Activated T-helper 1 cell treated with anti-CD3 and anti-CD28 coated beads, Interleukin-12 subunit alpha, Interleukin-12 subunit beta, Interleukin-2, Interleukin-4 antibody, amounts not matched to agents 30 ng/mL and 10 ng/mL and 1 ng/mL, durations not matched to agents 14 hours and 24 hours and 36 hours (primary cell): ENCODE measurements at regions of chr4 and their contacts with region 1.

Region 1: GRCh38 chr4:149264093-149264733 is 551.4 kb downstream of the IQCM start:
- DNase-seq: no peak
- H3K4me3 Mint-ChIP-seq: no peak overlapping the region
- H3K27ac Mint-ChIP-seq: no peak overlapping the region
- H3K4me1 Mint-ChIP-seq: no peaks in the 10 kb centered on the region
- H3K27me3 Mint-ChIP-seq: peaks cover 2% of the 10 kb centered on the region

Region 2: GRCh38 chr4:147924604-147925412 is 1339.4 kb before region 1 on chr4:
- intact Hi-C with region 1: loop called (anchors 10 kb)
- DNase-seq: no peak
- H3K4me3 Mint-ChIP-seq: no peak overlapping the region
- H3K27ac Mint-ChIP-seq: no peak overlapping the region
- H3K4me1 Mint-ChIP-seq: no peaks in the 10 kb centered on the region
- H3K27me3 Mint-ChIP-seq: no peaks in the 10 kb centered on the region

Region 3: DNA sequence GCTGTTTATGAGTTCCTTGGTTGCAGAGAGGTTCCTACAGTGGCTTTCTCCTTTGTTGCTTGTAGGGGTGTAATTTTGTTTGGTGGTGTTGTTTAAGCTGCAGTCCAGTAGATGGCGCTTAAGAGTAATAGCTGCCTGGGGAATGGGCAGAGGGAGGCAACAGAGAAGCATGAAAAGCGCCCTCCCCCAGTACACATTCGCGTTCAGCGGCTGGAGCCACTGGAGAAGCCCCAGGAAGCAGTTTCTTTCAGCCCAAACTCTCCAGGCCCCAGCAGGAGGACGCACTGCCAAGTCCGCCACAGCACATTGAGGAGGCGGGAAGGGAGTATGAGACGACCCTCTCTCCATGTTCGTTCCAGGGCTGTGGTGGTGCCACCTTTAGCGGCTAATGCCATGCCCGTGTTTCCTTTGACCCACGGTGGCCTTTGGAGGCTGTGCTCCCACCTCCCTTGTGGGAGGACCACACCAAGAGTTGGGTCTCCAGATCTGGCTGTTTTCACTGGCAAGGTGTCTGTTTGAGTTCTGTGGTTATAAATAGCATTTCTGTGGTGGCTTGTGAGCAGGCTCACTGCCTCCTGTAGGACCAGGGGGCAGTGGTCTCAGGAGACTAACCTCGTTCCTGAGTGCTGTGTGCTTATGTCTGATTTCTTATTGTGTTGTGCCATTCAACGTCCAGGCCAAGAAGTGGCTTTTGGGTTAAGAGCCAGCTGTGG is 1280.0 kb before region 1 on chr4:
- intact Hi-C with region 1: loop called (anchors 5 kb)
- DNase-seq: peak; percentile 8
- H3K4me3 Mint-ChIP-seq: no peak overlapping the region
- H3K27ac Mint-ChIP-seq: no peak overlapping the region
- H3K4me1 Mint-ChIP-seq: peaks cover 16% of the 10 kb centered on the region
- H3K27me3 Mint-ChIP-seq: peaks cover 5% of the 10 kb centered on the region

Region 4: DNA sequence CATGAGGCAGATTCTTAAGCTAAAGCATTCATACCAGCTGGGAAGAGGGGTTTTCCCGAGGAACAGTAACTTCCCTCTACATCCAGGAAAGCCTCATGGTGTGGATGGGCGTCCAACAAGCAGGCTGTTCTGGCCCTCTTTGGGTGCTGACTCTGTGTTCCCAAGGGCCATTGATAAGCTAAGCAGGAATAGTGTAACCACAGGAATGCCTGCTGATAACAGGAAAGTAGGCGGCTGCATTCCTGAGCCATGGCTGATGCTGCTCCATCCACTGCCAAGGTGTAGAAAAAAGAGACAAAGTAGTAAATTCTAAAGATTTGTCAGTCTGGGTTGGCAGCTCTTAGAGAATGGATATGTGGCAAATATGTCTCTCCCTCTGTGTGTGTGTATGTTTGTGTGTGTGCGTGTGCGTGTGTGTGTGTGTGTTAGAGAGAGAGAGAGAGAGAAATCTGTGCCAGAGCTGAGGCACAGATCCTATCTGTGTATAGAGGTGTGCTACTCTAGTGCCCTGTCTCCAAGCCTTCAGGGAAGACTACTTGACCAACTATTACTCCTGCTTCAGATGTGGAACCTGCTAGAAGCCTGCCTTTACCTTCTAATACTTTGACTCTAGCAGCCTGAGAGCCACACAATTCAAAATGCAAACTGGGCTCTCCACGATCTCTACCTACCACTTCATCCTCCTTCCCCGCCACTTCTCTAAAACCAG is 468.9 kb before region 1 on chr4:
- intact Hi-C with region 1: no loop called
- DNase-seq: no peak
- H3K4me3 Mint-ChIP-seq: no peak overlapping the region
- H3K27ac Mint-ChIP-seq: no peak overlapping the region
- H3K4me1 Mint-ChIP-seq: no peaks in the 10 kb centered on the region
- H3K27me3 Mint-ChIP-seq: no peaks in the 10 kb centered on the region

Region 5: GRCh38 chr4:148874331-148874730 is 389.9 kb before region 1 on chr4:
- intact Hi-C with region 1: no loop called
- DNase-seq: no peak
- H3K4me3 Mint-ChIP-seq: no peak overlapping the region
- H3K27ac Mint-ChIP-seq: no peak overlapping the region
- H3K4me1 Mint-ChIP-seq: no peaks in the 10 kb centered on the region
- H3K27me3 Mint-ChIP-seq: no peaks in the 10 kb centered on the region

Region 6: DNA sequence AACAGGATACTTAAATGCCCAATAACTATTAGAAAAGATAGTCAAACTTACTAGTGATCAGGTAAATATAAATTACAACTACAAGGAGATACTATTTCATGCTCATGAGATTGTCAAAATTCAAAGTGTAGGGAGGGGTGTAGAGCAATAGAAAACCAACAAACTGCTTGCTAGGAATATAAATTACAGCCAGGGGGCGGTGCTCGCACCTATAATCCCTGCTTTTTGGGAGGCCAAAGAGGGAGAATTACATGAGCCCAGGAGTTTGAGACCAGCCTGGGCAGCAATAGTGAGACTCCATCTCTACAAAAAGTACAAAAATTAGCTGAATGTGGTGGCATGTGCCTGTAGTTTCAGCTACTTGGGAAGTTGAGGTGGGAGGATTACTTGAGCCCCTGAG is 265.5 kb before region 1 on chr4:
- intact Hi-C with region 1: loop called (anchors 10 kb)
- DNase-seq: no peak
- H3K4me3 Mint-ChIP-seq: no peak overlapping the region
- H3K27ac Mint-ChIP-seq: no peak overlapping the region
- H3K4me1 Mint-ChIP-seq: no peaks in the 10 kb centered on the region
- H3K27me3 Mint-ChIP-seq: no peaks in the 10 kb centered on the region